ENCODE measurements at regions of chr4 and their contacts with region 1.

Region 1: DNA sequence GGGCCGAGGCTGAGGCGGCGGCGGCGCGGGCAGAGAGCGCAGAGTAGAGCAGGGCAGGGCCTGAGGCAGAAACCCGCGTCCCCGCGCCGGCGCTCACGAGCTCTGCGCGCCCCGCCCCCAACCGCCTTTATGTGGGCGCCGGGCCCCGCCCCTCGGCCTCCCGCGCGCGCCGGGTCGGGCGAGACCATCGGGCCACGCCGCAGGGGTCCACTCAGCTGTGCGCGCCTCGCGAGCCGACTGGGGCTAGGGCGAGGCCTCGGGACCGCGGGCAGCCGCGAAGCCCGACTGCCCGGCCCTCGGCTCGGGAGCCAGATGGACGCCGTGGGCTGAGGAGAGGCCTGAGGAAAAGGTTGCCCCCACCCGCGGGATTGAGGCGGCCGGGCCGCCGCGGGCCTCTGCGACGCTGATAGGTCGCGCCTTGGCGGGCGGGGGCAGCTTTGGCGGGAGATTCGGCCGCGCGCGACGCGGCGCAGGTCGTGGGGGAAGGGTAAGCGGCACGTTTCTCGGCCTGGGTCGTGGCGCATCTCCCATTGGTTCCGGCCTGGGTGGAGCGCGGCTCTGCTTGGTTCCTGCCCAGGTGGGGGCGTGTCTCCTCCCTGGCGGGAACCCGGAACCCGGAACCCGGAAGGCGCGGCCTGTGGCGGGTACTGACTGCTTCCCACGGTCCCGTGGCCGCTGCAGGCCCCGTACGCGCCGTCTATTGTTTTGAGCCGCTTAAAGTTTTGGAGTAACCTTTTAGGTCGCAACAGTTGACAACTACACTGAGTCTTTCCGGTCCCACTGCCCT is at the start of gene SLBP:
- DNase-seq: peak; percentile 99
- H3K4me3 Mint-ChIP-seq: peak within 1 kb of the TSS; percentile 99
- H3K27ac Mint-ChIP-seq: peak within 1 kb of the TSS; percentile 89
- H3K4me1 Mint-ChIP-seq: peaks cover 59% of the 10 kb centered on the region
- H3K27me3 Mint-ChIP-seq: no peaks in the 10 kb centered on the region
- total RNA-seq, gene SLBP: 136 and 140 TPM in 2 replicates

Region 2: GRCh38 chr4:1683736-1684505 is 28.5 kb before region 1 on chr4 and contains the start of gene FAM53A:
- intact Hi-C with region 1: loop called (anchors 1 kb)
- DNase-seq: peak; percentile 93
- H3K4me3 Mint-ChIP-seq: peak within 1 kb of the TSS; percentile 87
- H3K27ac Mint-ChIP-seq: peak within 1 kb of the TSS; percentile 90
- H3K4me1 Mint-ChIP-seq: peaks cover 12% of the 10 kb centered on the region
- H3K27me3 Mint-ChIP-seq: peaks cover 2% of the 10 kb centered on the region
- total RNA-seq, gene FAM53A: 2.5 and 5.5 TPM in 2 replicates

Region 3: DNA sequence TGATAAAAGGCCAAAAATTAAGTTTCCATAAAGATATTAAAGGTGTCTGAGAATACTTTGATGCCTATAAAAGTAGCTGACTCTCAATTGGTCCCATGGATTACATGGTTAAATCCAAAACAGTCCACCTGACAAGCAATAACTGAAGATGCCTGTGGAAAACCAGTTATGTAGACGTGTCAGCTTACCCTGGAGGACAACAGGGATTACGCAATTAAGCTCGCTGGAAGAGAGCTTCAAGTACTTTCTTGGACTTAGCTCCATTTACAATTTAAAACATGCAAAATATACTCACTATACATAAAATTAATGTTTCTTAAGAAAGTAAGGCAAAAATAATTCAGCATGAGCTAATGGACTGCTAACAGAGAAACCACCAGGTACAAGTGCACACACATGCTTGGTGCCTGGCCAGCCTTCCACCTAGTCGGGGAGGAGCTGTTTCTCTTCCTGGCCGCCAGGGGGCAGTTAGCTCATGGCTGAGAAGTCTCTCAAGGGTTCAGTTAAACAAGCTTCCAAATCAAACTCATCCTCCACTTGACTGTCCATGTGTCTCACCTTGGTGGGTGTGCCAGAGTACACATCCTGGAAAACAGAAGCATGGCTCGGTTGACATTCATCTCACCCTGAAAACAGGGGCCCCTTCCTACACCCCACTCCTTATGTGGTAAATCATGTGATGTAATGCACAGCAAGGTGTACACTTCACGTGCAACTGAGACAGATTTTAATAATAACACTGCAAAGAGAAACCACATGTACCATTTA is 19.1 kb before region 1 on chr4:
- intact Hi-C with region 1: loop called (anchors 1 kb)
- DNase-seq: peak; percentile 61
- H3K4me3 Mint-ChIP-seq: no peak overlapping the region
- H3K27ac Mint-ChIP-seq: peak overlapping the region; percentile 15
- H3K4me1 Mint-ChIP-seq: no peaks in the 10 kb centered on the region
- H3K27me3 Mint-ChIP-seq: no peaks in the 10 kb centered on the region

Region 4: GRCh38 chr4:1726146-1726934 is 13.9 kb after region 1 on chr4:
- intact Hi-C with region 1: loop called (anchors 1 kb)
- DNase-seq: peak; percentile 80
- H3K4me3 Mint-ChIP-seq: peak overlapping the region; percentile 10
- H3K27ac Mint-ChIP-seq: peak overlapping the region; percentile 37
- H3K4me1 Mint-ChIP-seq: peaks cover 47% of the 10 kb centered on the region
- H3K27me3 Mint-ChIP-seq: no peaks in the 10 kb centered on the region

Region 5: GRCh38 chr4:2418650-2419571 is 706.5 kb after region 1 on chr4 and contains the start of gene CFAP99:
- intact Hi-C with region 1: loop called (anchors 2 kb)
- DNase-seq: peak; percentile 94
- H3K4me3 Mint-ChIP-seq: peak within 1 kb of the TSS; percentile 85
- H3K27ac Mint-ChIP-seq: peak within 1 kb of the TSS; percentile 82
- H3K4me1 Mint-ChIP-seq: peaks cover 39% of the 10 kb centered on the region
- H3K27me3 Mint-ChIP-seq: peaks cover 55% of the 10 kb centered on the region
- total RNA-seq, gene CFAP99: not detected in 2 replicates